ENCODE measurements at regions of chr14 and their contacts with region 1.

Region 1: GRCh38 chr14:87944987-87945604 is 47.9 kb downstream of the GALC start:
- DNase-seq: no peak
- ATAC-seq: no peak
- H3K4me3 Mint-ChIP-seq: no peak overlapping the region
- H3K27ac Mint-ChIP-seq: no peak overlapping the region
- H3K4me1 Mint-ChIP-seq: peaks cover 7% of the 10 kb centered on the region
- H3K27me3 Mint-ChIP-seq: no peaks in the 10 kb centered on the region

Region 2: GRCh38 chr14:87869619-87870583 is 75.2 kb before region 1 on chr14:
- CTCF ChIA-PET with region 1: no interaction called
- DNase-seq: no peak
- ATAC-seq: no peak
- H3K4me3 Mint-ChIP-seq: no peak overlapping the region
- H3K27ac Mint-ChIP-seq: no peak overlapping the region
- H3K4me1 Mint-ChIP-seq: no peaks in the 10 kb centered on the region
- H3K27me3 Mint-ChIP-seq: peaks cover 7% of the 10 kb centered on the region

Region 3: GRCh38 chr14:87992718-87993628 is 47.9 kb after region 1 on chr14 and contains the start of gene GALC:
- CTCF ChIA-PET with region 1: interaction called, 25 read pairs
- DNase-seq: peak; percentile 98
- ATAC-seq: peak; percentile 90
- H3K4me3 Mint-ChIP-seq: peak within 1 kb of the TSS; percentile 93
- H3K27ac Mint-ChIP-seq: peak within 1 kb of the TSS; percentile 96
- H3K4me1 Mint-ChIP-seq: peaks cover 53% of the 10 kb centered on the region
- H3K27me3 Mint-ChIP-seq: no peaks in the 10 kb centered on the region
- total RNA-seq, gene GALC: 20.6 to 25.7 TPM

Region 4: GRCh38 chr14:88013750-88014349 is 68.8 kb after region 1 on chr14:
- CTCF ChIA-PET with region 1: interaction called, 19 read pairs
- DNase-seq: no peak
- ATAC-seq: peak; percentile 45
- H3K4me3 Mint-ChIP-seq: no peak overlapping the region
- H3K27ac Mint-ChIP-seq: no peak overlapping the region
- H3K4me1 Mint-ChIP-seq: peaks cover 51% of the 10 kb centered on the region
- H3K27me3 Mint-ChIP-seq: no peaks in the 10 kb centered on the region

Region 5: DNA sequence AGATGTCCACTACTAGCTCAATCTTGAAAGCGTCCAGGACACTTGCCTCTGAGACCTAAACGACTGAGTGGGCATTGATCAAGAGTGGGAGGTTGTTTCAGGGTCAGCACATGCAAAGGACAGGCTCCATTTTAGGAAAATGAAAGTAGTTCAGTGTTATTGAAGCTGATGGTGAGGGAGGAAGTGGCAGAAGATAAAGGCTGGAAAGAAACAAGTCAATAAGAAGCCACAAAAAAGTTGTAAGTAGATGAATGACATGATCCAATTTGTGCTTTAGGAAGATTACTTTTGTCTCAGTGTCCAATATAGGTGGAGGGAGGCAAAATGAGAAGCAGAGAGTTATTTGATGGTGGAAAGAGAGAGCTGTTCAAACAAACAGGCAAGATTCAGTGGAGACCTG is 81.8 kb after region 1 on chr14:
- CTCF ChIA-PET with region 1: interaction called, 12 read pairs
- DNase-seq: no peak
- ATAC-seq: peak; percentile 76
- H3K4me3 Mint-ChIP-seq: peak overlapping the region; percentile 38
- H3K27ac Mint-ChIP-seq: peak overlapping the region; percentile 88
- H3K4me1 Mint-ChIP-seq: peaks cover 64% of the 10 kb centered on the region
- H3K27me3 Mint-ChIP-seq: no peaks in the 10 kb centered on the region

Region 6: GRCh38 chr14:88168498-88169165 is 223.5 kb after region 1 on chr14:
- CTCF ChIA-PET with region 1: interaction called, 59 read pairs
- DNase-seq: peak; percentile 66
- ATAC-seq: peak; percentile 86
- H3K4me3 Mint-ChIP-seq: peak overlapping the region; percentile 37
- H3K27ac Mint-ChIP-seq: no peak overlapping the region
- H3K4me1 Mint-ChIP-seq: peaks cover 29% of the 10 kb centered on the region
- H3K27me3 Mint-ChIP-seq: peaks cover 26% of the 10 kb centered on the region

Region 7: GRCh38 chr14:88189417-88190191 is 244.5 kb after region 1 on chr14:
- CTCF ChIA-PET with region 1: interaction called, 22 read pairs
- DNase-seq: peak; percentile 77
- ATAC-seq: peak; percentile 78
- H3K4me3 Mint-ChIP-seq: peak overlapping the region; percentile 45
- H3K27ac Mint-ChIP-seq: no peak overlapping the region
- H3K4me1 Mint-ChIP-seq: peaks cover 4% of the 10 kb centered on the region
- H3K27me3 Mint-ChIP-seq: peaks cover 20% of the 10 kb centered on the region

Region 8: DNA sequence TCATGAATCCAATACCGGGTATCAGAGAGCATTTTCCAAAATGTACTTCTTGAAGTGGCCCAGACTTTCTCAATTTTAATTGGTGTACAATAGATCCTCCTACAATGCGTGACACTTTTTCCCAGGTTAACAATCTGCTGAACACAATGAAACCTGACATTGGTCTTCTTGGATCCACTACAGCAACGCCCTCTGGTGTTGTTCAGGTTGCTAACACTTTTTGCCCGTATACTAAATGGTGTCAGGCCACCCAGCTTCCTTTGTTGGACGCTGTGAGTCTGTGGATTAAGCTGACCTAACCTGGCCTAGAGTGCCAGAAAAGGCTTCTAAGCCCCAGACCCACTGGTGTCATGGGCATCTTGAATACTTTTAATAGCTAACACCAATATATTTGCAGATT is 288.8 kb after region 1 on chr14:
- CTCF ChIA-PET with region 1: interaction called, 13 read pairs
- DNase-seq: no peak
- ATAC-seq: no peak
- H3K4me3 Mint-ChIP-seq: no peak overlapping the region
- H3K27ac Mint-ChIP-seq: no peak overlapping the region
- H3K4me1 Mint-ChIP-seq: no peaks in the 10 kb centered on the region
- H3K27me3 Mint-ChIP-seq: peaks cover 28% of the 10 kb centered on the region

Measured in activated CD8-positive, alpha-beta memory T cell treated with anti-CD3 and anti-CD28 coated beads, Interleukin-2, amount 10 ng/mL, durations not matched to agents 7 days and 5 days (primary cell).